Activated CD8-positive, alpha-beta T cell treated with anti-CD3 and anti-CD28 coated beads for 36 hours (primary cell): ENCODE measurements at regions of chr11 and their contacts with region 1.

Region 1: DNA sequence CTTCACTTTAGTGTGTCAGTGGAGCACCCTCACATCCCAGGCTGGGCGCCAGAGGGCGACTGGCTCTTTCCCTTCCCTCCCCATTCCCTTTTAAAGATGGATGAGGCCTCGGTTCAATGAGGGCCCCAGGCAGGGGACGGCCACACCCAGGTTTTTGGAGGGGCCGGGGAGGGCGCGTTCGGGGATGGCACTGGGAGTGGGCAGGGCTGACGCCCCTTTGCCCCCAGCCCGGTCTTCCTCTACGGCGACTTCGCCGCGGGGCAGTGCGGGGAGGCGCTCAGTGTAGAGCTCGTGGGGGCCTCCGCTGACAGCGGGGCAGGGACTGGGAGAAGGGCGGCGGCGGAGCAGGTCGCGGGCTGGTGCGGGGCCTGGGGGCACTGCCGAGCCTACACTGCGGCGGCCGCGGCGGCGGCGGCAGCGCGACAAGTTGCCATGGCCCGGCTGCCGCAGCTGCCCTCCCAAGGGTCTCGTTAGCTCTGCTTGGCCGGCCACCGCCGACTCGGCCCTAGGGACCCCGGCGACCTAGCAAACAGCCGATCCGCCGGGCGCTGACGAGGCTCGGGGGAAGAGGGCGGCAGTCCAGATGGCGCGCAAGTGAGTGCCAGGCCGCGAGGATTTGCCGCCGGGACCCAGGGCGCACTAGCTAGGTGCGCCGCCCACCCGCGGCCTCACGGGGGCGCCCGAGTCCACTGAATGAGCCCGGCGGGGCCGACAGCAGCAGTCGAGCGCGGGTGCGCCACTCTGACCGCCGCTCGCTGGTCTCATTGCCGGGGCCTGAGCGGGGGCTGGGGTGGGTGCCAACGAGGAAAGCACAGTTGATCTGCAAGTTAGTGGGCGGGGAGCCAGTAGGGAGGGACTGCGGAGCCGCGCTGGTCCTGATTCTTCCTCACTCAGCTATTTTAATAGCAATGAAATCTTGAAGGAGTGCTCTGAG is 92.7 kb downstream of the RRM1 start:
- DNase-seq: peak; percentile 89
- ATAC-seq: peak; percentile 94
- H3K4me3 Mint-ChIP-seq: peak overlapping the region; percentile 66
- H3K27ac Mint-ChIP-seq: no peak overlapping the region
- H3K4me1 Mint-ChIP-seq: peaks cover 4% of the 10 kb centered on the region
- H3K27me3 Mint-ChIP-seq: peaks cover 2% of the 10 kb centered on the region
- CTCF ChIP-seq: peak; percentile 88

Region 2: DNA sequence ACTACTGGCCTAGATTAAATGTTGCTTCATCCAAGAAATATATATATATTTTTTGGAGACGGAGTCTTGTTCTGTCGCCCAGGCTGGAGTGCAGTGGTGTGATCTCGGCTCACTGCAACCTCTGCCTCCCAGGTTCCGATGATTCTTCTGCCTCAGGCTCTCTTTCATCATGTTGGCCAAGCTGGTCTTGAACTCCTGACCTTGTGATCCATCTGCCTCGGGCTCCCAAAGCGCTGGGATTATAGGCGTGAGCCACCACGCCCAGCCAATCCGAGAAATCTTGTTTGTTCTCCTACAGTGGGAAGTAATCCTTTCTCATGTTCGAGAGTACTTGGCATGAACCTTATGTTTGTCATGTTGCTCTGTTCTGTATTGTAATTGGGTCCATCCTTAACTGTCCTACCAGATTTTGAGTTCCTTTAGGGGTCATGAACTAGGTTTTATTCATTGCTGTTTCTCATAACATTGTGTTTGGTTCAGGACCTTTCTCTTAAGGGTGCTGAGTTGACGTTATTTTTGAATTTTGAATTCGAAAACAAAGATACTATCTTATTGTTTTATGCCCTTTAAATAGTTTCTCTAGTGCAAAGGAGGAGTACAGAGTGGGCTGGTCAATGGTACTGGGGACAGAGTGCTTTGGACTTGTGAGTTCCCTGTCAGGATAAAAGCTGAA is 206.2 kb before region 1 on chr11:
- CTCF ChIA-PET with region 1: no interaction called
- POLR2A ChIA-PET with region 1: no interaction called
- intact Hi-C with region 1: no loop called
- DNase-seq: no peak
- ATAC-seq: no peak
- H3K4me3 Mint-ChIP-seq: no peak overlapping the region
- H3K27ac Mint-ChIP-seq: no peak overlapping the region
- H3K4me1 Mint-ChIP-seq: peaks cover 73% of the 10 kb centered on the region
- H3K27me3 Mint-ChIP-seq: no peaks in the 10 kb centered on the region
- CTCF ChIP-seq: no peak

Region 3: GRCh38 chr11:4065601-4066377 is 121.5 kb before region 1 on chr11:
- CTCF ChIA-PET with region 1: no interaction called
- POLR2A ChIA-PET with region 1: no interaction called
- intact Hi-C with region 1: no loop called
- DNase-seq: no peak
- ATAC-seq: no peak
- H3K4me3 Mint-ChIP-seq: no peak overlapping the region
- H3K27ac Mint-ChIP-seq: no peak overlapping the region
- H3K4me1 Mint-ChIP-seq: peaks cover 68% of the 10 kb centered on the region
- H3K27me3 Mint-ChIP-seq: no peaks in the 10 kb centered on the region
- CTCF ChIP-seq: no peak

Region 4: GRCh38 chr11:4203603-4204360 is 16.5 kb after region 1 on chr11:
- CTCF ChIA-PET with region 1: interaction called, 18 read pairs
- POLR2A ChIA-PET with region 1: interaction called, 3 read pairs
- intact Hi-C with region 1: no loop called
- DNase-seq: no peak
- ATAC-seq: no peak
- H3K4me3 Mint-ChIP-seq: no peak overlapping the region
- H3K27ac Mint-ChIP-seq: no peak overlapping the region
- H3K4me1 Mint-ChIP-seq: no peaks in the 10 kb centered on the region
- H3K27me3 Mint-ChIP-seq: peaks cover 10% of the 10 kb centered on the region
- CTCF ChIP-seq: no peak

Region 5: GRCh38 chr11:4418403-4418802 is 231.1 kb after region 1 on chr11:
- CTCF ChIA-PET with region 1: interaction called, 10 read pairs
- POLR2A ChIA-PET with region 1: no interaction called
- intact Hi-C with region 1: no loop called
- DNase-seq: no peak
- ATAC-seq: no peak
- H3K4me3 Mint-ChIP-seq: no peak overlapping the region
- H3K27ac Mint-ChIP-seq: no peak overlapping the region
- H3K4me1 Mint-ChIP-seq: no peaks in the 10 kb centered on the region
- H3K27me3 Mint-ChIP-seq: peaks cover 1% of the 10 kb centered on the region
- CTCF ChIP-seq: no peak

Region 6: GRCh38 chr11:4539603-4540219 is 352.4 kb after region 1 on chr11:
- CTCF ChIA-PET with region 1: interaction called, 107 read pairs
- POLR2A ChIA-PET with region 1: no interaction called
- intact Hi-C with region 1: loop called (anchors 2 kb)
- DNase-seq: peak; percentile 66
- ATAC-seq: peak; percentile 81
- H3K4me3 Mint-ChIP-seq: no peak overlapping the region
- H3K27ac Mint-ChIP-seq: no peak overlapping the region
- H3K4me1 Mint-ChIP-seq: no peaks in the 10 kb centered on the region
- H3K27me3 Mint-ChIP-seq: peaks cover 2% of the 10 kb centered on the region
- CTCF ChIP-seq: peak; percentile 58

Region 7: DNA sequence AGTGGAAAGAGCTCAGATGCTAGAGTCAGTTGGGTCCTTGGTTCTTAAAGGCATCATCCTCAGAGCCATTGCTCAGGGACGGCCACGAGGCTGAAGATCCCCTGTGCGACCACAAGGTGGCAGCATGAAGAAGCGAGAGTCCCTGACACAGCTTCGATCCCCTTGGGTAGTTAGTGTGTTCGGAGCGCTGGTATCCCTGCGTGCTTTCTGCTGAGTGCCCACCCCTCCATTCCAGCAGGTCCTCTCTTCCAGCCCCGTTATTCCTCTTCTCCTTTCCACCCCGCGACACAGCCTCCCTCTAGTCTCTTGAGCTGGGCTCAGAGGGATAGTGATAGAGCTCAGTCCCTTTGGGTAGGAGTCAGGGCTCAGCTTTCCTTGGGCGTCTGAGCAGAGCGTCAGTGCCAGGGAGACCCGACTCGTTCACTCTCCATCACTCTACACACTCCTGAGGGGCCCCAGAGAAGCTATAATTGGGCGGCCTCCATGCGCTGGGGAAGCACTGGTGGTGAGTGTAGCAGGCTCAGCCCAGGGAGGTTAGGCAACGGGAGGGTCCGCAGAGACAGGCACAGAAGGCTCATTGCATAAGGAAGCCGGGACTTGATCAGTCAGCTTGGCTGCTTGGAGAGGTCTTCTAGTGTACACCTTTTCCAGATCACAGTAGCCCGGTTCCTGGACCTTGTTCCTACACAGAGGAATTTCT is 449.8 kb after region 1 on chr11 and contains the start of gene OR51D1:
- CTCF ChIA-PET with region 1: interaction called, 10 read pairs
- POLR2A ChIA-PET with region 1: no interaction called
- intact Hi-C with region 1: no loop called
- DNase-seq: peak; percentile 76
- ATAC-seq: peak; percentile 95
- H3K4me3 Mint-ChIP-seq: no peak within 1 kb of the TSS
- H3K27ac Mint-ChIP-seq: no peak within 1 kb of the TSS
- H3K4me1 Mint-ChIP-seq: no peaks in the 10 kb centered on the region
- H3K27me3 Mint-ChIP-seq: peaks cover 5% of the 10 kb centered on the region
- CTCF ChIP-seq: peak; percentile 90
- total RNA-seq, gene OR51D1: not detected